IMR-90 (cell line): ENCODE measurements at regions of chr20 and their contacts with region 1.

Region 1: DNA sequence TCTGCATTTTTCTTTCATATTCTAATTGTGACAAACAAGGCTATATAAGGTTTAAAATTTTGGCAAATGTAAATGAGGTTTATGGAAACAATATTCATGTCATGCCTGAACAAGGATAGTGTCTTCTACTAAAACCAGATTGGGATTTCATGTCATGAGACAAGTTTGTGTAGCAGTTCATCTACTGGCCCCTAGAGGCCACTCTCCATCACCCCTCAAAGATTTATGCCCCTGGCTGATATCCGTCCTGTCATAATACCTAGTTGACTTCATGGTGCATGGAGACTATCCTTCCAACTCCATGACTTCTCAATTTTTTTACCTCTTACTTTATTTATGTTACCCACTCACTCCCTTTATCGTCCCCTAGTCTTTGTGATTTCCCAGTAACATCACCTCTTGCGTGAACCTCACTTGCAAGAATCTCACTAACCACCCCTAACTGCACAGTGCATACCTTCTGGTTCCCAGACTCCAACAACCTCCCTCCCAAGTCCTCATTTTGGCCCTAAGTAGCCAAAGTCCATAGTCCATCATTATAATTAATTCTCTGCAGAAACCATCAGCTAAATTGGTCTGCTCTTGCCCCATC is 179.8 kb downstream of the TASP1 start:
- DNase-seq: peak; percentile 41
- ATAC-seq: peak; percentile 53
- H3K4me3 ChIP-seq: no peak overlapping the region
- H3K27ac ChIP-seq: no peak overlapping the region
- H3K4me1 ChIP-seq: peaks cover 3% of the 10 kb centered on the region
- H3K27me3 ChIP-seq: no peaks in the 10 kb centered on the region
- CTCF ChIP-seq: peak; percentile 71
- POLR2A ChIP-seq: no peak
- RAD21 ChIP-seq: peak; percentile 76

Region 2: DNA sequence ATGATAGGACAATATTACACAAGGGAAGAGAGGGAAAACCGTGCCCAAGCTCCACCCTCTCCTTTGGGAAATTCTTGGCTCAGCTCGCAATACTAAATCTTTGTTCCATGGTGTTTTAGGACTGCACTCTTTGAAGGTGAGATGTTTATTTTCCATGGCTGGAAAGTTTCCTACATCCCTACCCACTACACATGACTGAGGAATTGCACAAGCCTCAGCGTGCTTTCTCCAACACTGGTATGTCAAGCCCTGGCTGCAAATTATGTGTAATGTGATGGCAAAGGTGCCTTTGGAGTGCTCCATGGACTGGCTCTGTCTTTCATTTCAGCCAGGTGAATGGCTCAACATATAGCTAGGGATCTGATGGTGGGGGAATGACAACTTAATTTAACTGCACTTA is 103.5 kb before region 1 on chr20:
- CTCF ChIA-PET with region 1: no interaction called
- POLR2A ChIA-PET with region 1: no interaction called
- dilution Hi-C with region 1: no loop called
- in situ Hi-C with region 1: loop called (anchors 25 kb)
- intact Hi-C with region 1: no loop called
- DNase-seq: no peak
- ATAC-seq: no peak
- H3K4me3 ChIP-seq: no peak overlapping the region
- H3K27ac ChIP-seq: no peak overlapping the region
- H3K4me1 ChIP-seq: no peaks in the 10 kb centered on the region; the same call in 1 of the 2 replicates
- H3K27me3 ChIP-seq: no peaks in the 10 kb centered on the region; the same call in 1 of the 2 replicates
- CTCF ChIP-seq: no peak
- POLR2A ChIP-seq: no peak
- RAD21 ChIP-seq: no peak

Region 3: GRCh38 chr20:13771853-13772453 is 313.0 kb after region 1 on chr20:
- CTCF ChIA-PET with region 1: no interaction called
- POLR2A ChIA-PET with region 1: no interaction called
- dilution Hi-C with region 1: no loop called
- in situ Hi-C with region 1: loop called (anchors 25 kb)
- intact Hi-C with region 1: loop called (anchors 10 kb)
- DNase-seq: peak; percentile 27
- ATAC-seq: peak; percentile 48; the same call in 1 of the 2 replicates
- H3K4me3 ChIP-seq: no peak overlapping the region
- H3K27ac ChIP-seq: no peak overlapping the region
- H3K4me1 ChIP-seq: no peaks in the 10 kb centered on the region
- H3K27me3 ChIP-seq: no peaks in the 10 kb centered on the region
- CTCF ChIP-seq: peak; percentile 51
- POLR2A ChIP-seq: no peak
- RAD21 ChIP-seq: peak; percentile 26